ENCODE measurements at regions of chr14 and their contacts with region 1.

Region 1: DNA sequence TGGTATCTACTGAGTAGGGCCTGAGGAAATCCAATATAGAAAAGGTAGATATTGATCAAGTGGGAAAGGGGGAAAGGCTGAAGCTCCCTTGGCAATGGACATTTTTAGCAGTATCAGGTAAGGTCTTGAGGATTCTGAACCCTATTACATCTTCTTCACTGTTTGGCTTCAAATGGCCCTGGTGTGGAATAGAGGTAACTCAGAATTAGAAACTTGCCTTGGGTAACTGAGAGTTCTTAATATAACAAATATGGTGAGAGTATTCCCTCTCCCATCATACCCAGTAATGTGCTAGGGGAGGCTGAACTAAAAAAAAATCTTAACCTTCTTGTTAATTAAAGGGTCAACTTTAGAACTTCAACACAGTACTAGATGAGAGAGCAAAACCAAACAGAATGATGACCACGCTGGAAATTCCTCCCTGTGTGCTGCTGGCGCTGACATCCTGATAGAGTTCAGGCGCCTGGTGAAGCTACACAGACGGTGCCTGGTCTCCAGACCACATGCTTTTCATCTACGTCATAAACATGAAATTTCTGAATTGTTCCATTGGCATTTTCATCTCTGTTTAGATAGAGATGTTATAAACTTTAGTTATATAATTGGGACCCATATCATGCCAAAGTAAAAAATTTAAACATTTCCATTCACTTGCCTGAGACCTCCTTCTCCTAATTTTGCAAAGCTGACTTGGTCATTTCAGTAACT is 128.3 kb downstream of the AKAP6 start:
- DNase-seq: no peak
- ATAC-seq: no peak
- H3K4me3 ChIP-seq: no peak overlapping the region
- H3K27ac ChIP-seq: no peak overlapping the region
- H3K4me1 ChIP-seq: no peaks in the 10 kb centered on the region
- H3K27me3 ChIP-seq: no peaks in the 10 kb centered on the region
- CTCF ChIP-seq: no peak

Region 2: DNA sequence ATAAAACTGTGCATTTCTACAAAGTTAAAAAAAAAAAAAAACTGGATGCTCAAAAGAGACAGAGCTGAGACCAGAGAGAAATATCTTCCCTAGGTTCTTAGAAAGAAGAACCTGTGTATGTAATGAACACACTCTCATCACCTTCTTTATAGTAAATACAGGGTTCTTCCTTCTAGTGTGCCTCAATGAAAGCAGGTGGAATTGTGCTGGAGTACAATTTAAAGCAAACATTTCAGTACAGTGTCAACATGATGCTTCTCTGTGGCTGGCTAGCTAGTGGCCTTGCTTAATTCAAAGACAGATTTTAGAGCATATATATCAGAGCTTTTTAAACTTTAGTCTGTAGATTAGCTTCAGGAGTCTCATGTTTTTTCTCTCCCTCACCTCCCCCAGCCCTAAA is 630.0 kb before region 1 on chr14:
- CTCF ChIA-PET with region 1: no interaction called
- POLR2A ChIA-PET with region 1: interaction called, 15 read pairs
- intact Hi-C with region 1: no loop called
- DNase-seq: no peak
- ATAC-seq: no peak
- H3K4me3 ChIP-seq: no peak overlapping the region
- H3K27ac ChIP-seq: no peak overlapping the region
- H3K4me1 ChIP-seq: no peaks in the 10 kb centered on the region
- H3K27me3 ChIP-seq: no peaks in the 10 kb centered on the region
- CTCF ChIP-seq: no peak

Measured in PC-3 (cell line).